Vagina (tissue), 2 donors: ENCODE measurements at regions of chr22 and their contacts with region 1.

Region 1: DNA sequence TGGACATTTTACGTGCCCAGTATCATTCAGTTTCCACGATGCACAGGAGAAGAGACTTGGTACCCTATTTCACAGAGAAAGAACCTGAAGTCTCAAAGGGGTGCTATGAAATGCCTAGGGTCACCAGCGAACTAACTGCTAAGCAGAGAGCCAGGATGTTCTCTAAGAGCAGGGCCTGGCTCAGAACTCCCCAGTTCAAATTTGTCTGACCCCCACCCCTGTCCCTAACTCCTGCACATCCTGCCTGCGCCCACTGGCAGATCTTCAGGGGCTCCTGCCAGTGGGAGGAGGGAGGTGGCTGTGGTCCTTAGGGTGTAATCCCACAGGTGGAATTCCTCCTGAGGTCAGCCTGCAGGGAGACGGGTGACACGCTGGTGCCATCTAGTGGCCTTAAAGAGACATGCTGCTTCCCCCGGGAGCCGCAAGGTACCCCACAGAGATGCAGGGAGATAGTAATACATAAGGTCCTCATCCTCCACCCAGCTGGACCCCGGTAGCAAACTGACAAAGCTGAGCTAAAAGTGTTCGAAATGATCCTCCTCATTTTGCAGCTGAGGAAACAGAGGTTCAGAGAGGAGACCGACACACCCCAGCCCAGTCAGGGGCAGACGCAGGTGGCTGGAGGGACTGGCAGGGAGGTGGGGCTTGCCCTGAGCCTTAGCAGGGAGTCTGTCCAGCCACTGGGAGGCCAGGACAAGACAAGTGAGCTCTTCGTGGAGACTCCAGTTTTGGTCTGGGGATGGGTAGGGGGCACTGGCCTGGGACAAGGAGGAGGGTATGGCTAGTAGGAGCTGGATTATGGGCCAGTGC is 34.1 kb downstream of the MB start:
- DNase-seq: no peak
- H3K4me3 ChIP-seq: no peak overlapping the region
- H3K27ac ChIP-seq: no peak overlapping the region
- H3K4me1 ChIP-seq: peaks cover 6% of the 10 kb centered on the region
- H3K27me3 ChIP-seq: no peaks in the 10 kb centered on the region
- CTCF ChIP-seq: peak; percentile 86 to 90 (median 88)
- POLR2A ChIP-seq: no peak

Region 2: GRCh38 chr22:35392357-35392756 is 190.7 kb before region 1 on chr22:
- intact Hi-C with region 1: no loop called
- DNase-seq: no peak
- H3K4me3 ChIP-seq: no peak overlapping the region
- H3K27ac ChIP-seq: no peak overlapping the region
- H3K4me1 ChIP-seq: no peaks in the 10 kb centered on the region
- H3K27me3 ChIP-seq: no peaks in the 10 kb centered on the region
- CTCF ChIP-seq: no peak
- POLR2A ChIP-seq: no peak

Region 3: DNA sequence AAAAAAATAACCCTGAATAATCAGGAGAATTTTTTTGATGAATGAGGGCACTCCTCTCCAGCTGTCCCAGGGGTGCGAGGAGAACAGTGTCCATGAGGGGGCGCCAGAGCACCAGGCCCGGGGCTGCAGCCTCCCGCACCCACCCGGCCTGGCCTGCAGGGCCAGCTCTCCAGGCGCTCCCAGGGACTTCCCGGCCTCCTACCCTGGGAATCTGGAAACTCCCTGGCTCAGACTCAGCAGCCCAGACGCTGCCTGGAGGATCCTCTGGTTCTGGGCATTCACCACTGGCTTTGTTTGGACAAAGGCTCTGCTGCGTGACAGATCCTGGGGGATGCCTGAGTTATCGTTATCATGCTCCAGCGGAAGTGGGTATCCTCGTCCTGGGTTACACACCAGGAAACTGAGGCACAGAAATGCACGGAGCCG is 152.2 kb before region 1 on chr22:
- intact Hi-C with region 1: loop called (anchors 2 kb)
- DNase-seq: no peak
- H3K4me3 ChIP-seq: no peak overlapping the region
- H3K27ac ChIP-seq: peak overlapping the region; percentile 18
- H3K4me1 ChIP-seq: peaks cover 10% of the 10 kb centered on the region
- H3K27me3 ChIP-seq: no peaks in the 10 kb centered on the region
- CTCF ChIP-seq: peak; percentile 85 to 99 (median 97)
- POLR2A ChIP-seq: no peak

Region 4: DNA sequence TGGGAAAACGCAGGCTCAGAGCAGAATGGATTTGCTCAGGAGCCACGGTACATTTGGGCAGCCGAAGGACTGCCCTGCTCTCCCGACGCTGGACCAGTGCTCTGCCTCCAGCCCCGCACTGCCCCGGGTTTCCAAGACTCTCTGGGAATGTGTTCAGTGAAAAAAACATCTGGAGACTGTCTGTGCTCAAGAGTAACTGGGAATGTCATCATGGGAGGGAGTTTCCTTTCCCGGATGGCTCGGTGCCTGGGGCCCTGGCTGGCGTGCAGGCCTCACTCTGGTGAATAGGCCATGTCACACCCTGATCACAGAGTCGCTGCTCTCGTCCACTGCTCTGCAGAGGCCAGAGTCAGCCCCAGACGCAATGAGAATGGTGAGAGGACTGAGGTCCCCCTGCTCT is 55.3 kb after region 1 on chr22:
- intact Hi-C with region 1: no loop called
- DNase-seq: peak in 1 of 2 donors; percentile 93
- H3K4me3 ChIP-seq: peak overlapping the region in 1 of 2 donors; percentile 22
- H3K27ac ChIP-seq: peak overlapping the region; percentile 93
- H3K4me1 ChIP-seq: peaks cover 36% of the 10 kb centered on the region
- H3K27me3 ChIP-seq: no peaks in the 10 kb centered on the region
- CTCF ChIP-seq: no peak
- POLR2A ChIP-seq: no peak